Activated naive CD4-positive, alpha-beta T cell treated with anti-CD3 and anti-CD28 coated beads for 36 hours (primary cell): ENCODE measurements at regions of chr10 and their contacts with region 1.

Region 1: GRCh38 chr10:17023386-17024298 is 106.0 kb downstream of the CUBN start:
- DNase-seq: peak; percentile 93
- H3K4me3 Mint-ChIP-seq: peak overlapping the region; percentile 7
- H3K27ac Mint-ChIP-seq: peak overlapping the region; percentile 78
- H3K4me1 Mint-ChIP-seq: peaks cover 59% of the 10 kb centered on the region
- H3K27me3 Mint-ChIP-seq: peaks cover 2% of the 10 kb centered on the region

Region 2: GRCh38 chr10:16787361-16787791 is 236.3 kb before region 1 on chr10:
- CTCF ChIA-PET with region 1: no interaction called
- intact Hi-C with region 1: loop called (anchors 2 kb)
- DNase-seq: peak; percentile 88
- H3K4me3 Mint-ChIP-seq: peak overlapping the region; percentile 65
- H3K27ac Mint-ChIP-seq: peak overlapping the region; percentile 91
- H3K4me1 Mint-ChIP-seq: peaks cover 28% of the 10 kb centered on the region
- H3K27me3 Mint-ChIP-seq: no peaks in the 10 kb centered on the region

Region 3: GRCh38 chr10:16891375-16892313 is 132.0 kb before region 1 on chr10:
- CTCF ChIA-PET with region 1: no interaction called
- intact Hi-C with region 1: loop called (anchors 1 kb)
- DNase-seq: peak; percentile 71
- H3K4me3 Mint-ChIP-seq: peak overlapping the region; percentile 52
- H3K27ac Mint-ChIP-seq: peak overlapping the region; percentile 69
- H3K4me1 Mint-ChIP-seq: peaks cover 8% of the 10 kb centered on the region
- H3K27me3 Mint-ChIP-seq: no peaks in the 10 kb centered on the region

Region 4: GRCh38 chr10:17075533-17076359 is 52.1 kb after region 1 on chr10:
- CTCF ChIA-PET with region 1: no interaction called
- intact Hi-C with region 1: loop called (anchors 1 kb)
- DNase-seq: no peak
- H3K4me3 Mint-ChIP-seq: no peak overlapping the region
- H3K27ac Mint-ChIP-seq: no peak overlapping the region
- H3K4me1 Mint-ChIP-seq: peaks cover 28% of the 10 kb centered on the region
- H3K27me3 Mint-ChIP-seq: no peaks in the 10 kb centered on the region

Region 5: GRCh38 chr10:17200912-17201793 is 177.5 kb after region 1 on chr10 and contains the start of gene TRDMT1:
- CTCF ChIA-PET with region 1: no interaction called
- intact Hi-C with region 1: loop called (anchors 1 kb)
- DNase-seq: peak; percentile 77
- H3K4me3 Mint-ChIP-seq: peak within 1 kb of the TSS; percentile 86
- H3K27ac Mint-ChIP-seq: peak within 1 kb of the TSS; percentile 92
- H3K4me1 Mint-ChIP-seq: peaks cover 35% of the 10 kb centered on the region
- H3K27me3 Mint-ChIP-seq: no peaks in the 10 kb centered on the region
- total RNA-seq, gene TRDMT1: 6.5 to 7.2 TPM

Region 6: DNA sequence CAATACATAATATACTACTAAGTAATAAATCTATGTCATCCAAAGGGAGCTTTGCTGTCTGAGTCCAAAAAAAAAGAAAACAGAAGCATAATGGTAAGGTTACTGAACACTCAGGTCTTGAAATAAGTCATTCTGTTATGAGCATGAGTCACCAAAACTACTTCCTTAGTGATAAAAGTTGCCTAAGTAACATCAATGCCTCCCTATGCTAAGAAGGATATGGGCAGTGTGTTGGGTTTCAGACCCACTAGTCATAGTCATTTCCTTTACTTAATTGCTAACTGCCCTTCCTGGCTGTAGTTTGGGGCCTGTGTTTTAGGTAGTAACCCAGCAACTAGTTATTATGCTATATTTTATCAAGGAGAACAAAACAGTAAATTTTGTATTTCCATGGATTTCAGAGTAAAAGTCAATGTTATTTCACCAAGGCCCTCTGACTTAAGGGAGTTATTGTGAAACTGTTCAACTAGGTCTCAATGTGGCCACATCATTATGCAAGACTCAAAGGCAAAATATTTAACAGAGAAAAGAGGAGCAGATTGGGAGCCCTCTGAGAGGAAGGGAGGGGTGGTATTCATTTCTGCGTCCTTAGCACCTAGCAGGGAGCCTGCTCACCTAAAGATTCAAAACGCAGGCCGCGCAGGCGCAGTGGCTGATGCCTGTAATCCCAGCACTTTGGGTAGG is 192.7 kb after region 1 on chr10:
- CTCF ChIA-PET with region 1: no interaction called
- intact Hi-C with region 1: loop called (anchors 1 kb)
- DNase-seq: peak; percentile 55
- H3K4me3 Mint-ChIP-seq: no peak overlapping the region
- H3K27ac Mint-ChIP-seq: peak overlapping the region; percentile 54
- H3K4me1 Mint-ChIP-seq: peaks cover 33% of the 10 kb centered on the region
- H3K27me3 Mint-ChIP-seq: no peaks in the 10 kb centered on the region

Region 7: DNA sequence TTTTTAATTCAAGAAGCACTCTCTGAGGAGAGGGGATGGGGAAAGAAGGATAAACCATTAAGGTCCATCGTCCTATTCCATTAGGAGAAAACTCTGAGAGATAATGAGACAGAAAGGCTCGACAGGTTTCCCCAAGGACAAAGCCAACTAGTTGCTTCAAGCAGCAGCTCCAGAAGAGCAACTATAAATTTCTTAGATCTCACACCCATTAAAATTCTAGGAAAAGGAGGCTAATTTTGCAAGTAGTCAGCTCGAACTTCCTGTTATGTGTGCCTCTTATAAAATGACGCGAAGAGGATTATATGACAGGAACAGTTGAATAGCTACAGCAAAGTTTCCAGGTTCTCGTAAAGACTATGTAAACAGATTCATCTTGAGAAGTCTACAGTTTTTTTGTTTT is 482.7 kb after region 1 on chr10:
- CTCF ChIA-PET with region 1: no interaction called
- intact Hi-C with region 1: loop called (anchors 1 kb)
- DNase-seq: no peak
- H3K4me3 Mint-ChIP-seq: no peak overlapping the region
- H3K27ac Mint-ChIP-seq: peak overlapping the region; percentile 61
- H3K4me1 Mint-ChIP-seq: peaks cover 33% of the 10 kb centered on the region
- H3K27me3 Mint-ChIP-seq: no peaks in the 10 kb centered on the region

Region 8: GRCh38 chr10:18659120-18659818 is 1635.6 kb after region 1 on chr10 and contains the start of gene ARL5B:
- CTCF ChIA-PET with region 1: no interaction called
- intact Hi-C with region 1: no loop called
- DNase-seq: peak; percentile 97
- H3K4me3 Mint-ChIP-seq: peak within 1 kb of the TSS; percentile 93
- H3K27ac Mint-ChIP-seq: peak within 1 kb of the TSS; percentile 98
- H3K4me1 Mint-ChIP-seq: peaks cover 36% of the 10 kb centered on the region
- H3K27me3 Mint-ChIP-seq: no peaks in the 10 kb centered on the region
- total RNA-seq, gene ARL5B: 13.8 to 14.1 TPM